ENCODE measurements at regions of chr10 and their contacts with region 1.

Region 1: DNA sequence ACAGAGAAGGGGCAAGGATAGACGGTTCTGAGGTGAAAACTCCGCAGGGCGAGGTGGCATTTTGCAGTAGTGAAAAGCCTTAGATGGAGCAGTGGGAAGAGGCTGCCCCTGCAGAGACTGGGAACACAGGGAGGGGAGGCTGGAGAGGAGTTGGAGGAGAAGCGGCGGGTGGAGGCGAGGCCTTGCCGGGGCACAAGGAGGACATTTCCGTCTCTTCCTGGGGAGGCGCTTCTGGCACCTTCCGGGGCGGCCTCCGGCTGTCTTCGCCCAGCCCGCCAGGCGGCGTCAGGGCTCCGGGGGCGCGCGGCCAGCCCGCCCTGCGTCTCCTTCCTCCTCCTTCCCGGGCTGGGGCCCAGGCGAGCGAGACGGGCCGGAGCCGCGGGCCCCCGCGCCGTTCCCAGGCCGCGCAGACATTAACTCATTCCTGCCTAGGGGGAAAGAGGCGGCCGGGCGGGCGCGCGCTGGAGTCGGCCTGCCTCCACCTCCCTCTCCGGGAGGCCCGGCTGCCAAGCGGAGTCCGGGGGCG is 42.7 kb downstream of the LDB3 start:
- DNase-seq: peak; percentile 94
- ATAC-seq: peak; percentile 70

Region 2: GRCh38 chr10:86569335-86569734 is 141.7 kb before region 1 on chr10:
- intact Hi-C with region 1: no loop called
- DNase-seq: no peak
- ATAC-seq: no peak

Region 3: DNA sequence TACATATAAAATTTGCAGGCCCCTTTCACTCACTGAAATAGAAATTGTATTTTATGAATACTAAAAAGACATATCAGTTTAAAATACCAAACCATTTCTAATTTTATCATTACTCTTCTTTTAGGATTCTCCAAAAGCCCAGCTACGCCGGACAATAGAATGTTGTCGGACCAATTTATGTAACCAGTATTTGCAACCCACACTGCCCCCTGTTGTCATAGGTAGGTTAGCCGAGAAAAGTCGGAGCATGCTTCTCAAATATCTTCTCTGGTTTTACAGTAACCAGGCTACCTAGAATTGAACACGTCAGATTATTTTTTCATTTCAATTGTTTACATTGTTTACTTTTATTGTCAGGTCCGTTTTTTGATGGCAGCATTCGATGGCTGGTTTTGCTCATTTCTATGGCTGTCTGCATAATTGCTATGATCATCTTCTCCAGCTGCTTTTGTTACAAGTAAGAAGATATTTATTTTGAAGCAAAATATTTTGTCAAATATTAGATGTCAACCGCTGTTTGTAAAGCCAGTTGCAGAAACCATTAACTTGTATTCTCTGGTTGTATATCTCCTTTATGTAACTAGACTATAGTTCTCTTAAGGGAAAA is 188.7 kb after region 1 on chr10:
- intact Hi-C with region 1: loop called (anchors 10 kb)
- DNase-seq: no peak
- ATAC-seq: peak; percentile 62